Testis (tissue), 5 donors: ENCODE measurements at regions of chr3 and their contacts with region 1.

Region 1: GRCh38 chr3:192566706-192567290 is 160.5 kb downstream of the FGF12 start:
- DNase-seq: peak; percentile 92
- H3K4me3 ChIP-seq: no peak overlapping the region
- H3K27ac ChIP-seq: no peak overlapping the region
- H3K4me1 ChIP-seq: no peaks in the 10 kb centered on the region
- H3K27me3 ChIP-seq: no peaks in the 10 kb centered on the region
- CTCF ChIP-seq: peak; percentile 58 to 71 (median 68)
- POLR2A ChIP-seq: no peak

Region 2: DNA sequence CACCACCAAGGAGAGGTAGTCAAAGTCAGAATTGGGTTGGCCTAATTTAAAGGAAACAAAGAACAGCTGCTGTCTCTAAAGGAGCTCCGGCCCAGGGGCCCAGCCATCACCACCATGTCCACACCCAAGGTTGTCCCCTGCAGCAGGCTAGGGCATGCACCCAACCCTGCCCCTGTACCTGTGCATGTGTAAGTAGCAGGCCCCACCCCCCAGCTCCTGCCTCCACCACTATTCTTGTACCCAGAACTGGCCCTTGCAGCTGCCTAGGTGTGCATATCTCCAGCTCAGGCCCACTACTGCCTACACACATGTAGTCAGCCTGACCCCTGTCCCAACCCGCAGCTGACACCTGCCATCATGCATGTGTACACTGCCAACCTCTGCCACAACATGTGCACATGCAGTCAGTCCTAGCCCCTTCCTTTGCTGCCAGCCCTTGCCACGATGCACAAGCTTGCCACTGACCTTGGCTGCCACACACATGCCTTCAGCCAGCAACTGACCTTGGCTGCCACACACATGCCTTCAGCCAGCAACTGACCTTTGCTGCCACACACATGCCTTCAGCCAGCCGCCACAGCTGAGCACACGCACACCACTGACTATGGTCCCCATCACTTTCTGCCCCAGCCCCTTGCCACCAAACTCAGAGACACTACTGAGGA is 120.8 kb after region 1 on chr3:
- intact Hi-C with region 1: no loop called
- DNase-seq: no peak
- H3K4me3 ChIP-seq: no peak overlapping the region
- H3K27ac ChIP-seq: no peak overlapping the region
- H3K4me1 ChIP-seq: no peaks in the 10 kb centered on the region
- H3K27me3 ChIP-seq: no peaks in the 10 kb centered on the region
- CTCF ChIP-seq: no peak
- POLR2A ChIP-seq: no peak

Region 3: DNA sequence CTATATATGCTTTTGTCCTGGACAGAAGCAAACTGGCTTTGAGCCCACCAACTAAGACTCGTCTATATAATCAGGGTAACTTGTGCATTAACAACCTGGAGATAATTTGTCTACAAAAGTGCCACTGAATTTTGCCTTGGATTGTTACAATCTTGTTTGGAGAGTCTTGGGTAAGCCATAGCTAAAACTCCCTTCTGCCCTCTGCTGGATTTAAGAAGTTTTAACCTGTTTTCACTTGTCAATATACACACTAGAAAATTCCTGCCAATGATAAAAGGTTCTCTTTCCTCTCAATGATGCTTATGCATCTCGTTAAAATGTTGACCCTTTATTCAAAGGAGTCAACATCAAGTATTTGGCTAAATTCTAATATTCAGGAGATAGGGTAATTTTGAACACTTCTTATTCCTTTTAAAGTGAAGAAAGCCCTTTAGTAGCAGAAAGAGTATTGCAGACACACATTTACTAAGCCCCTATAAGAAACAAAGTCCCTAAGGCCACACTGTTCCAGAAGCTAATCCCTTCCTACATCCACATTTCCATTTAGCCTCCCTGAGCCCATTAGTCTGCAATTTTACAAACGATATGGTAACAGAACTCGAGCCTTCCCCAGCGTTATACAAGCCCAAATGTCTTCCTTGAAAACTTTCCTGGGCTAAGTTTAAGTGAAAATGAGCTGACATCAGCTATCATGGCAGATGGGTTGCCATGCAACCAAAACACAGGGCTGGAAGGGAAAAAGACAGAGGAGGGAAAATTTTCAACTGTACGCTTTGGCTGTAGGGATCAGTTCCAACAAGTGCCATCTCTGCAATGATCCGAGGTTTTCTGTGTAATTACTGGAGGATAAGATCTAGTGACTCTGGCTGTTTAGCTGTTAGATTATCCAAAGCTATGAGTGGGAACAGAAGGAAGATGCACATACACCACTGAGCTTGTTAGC is 236.4 kb after region 1 on chr3:
- intact Hi-C with region 1: loop called (anchors 10 kb)
- DNase-seq: no peak
- H3K4me3 ChIP-seq: no peak overlapping the region
- H3K27ac ChIP-seq: no peak overlapping the region
- H3K4me1 ChIP-seq: peaks cover 7% of the 10 kb centered on the region
- H3K27me3 ChIP-seq: no peaks in the 10 kb centered on the region
- CTCF ChIP-seq: peak in 1 of 3 experiments; percentile 55
- POLR2A ChIP-seq: no peak

Region 4: GRCh38 chr3:193545304-193545703 is 978.5 kb after region 1 on chr3:
- intact Hi-C with region 1: no loop called
- DNase-seq: no peak
- H3K4me3 ChIP-seq: no peak overlapping the region
- H3K27ac ChIP-seq: no peak overlapping the region
- H3K4me1 ChIP-seq: no peaks in the 10 kb centered on the region
- H3K27me3 ChIP-seq: no peaks in the 10 kb centered on the region
- CTCF ChIP-seq: no peak
- POLR2A ChIP-seq: no peak